ENCODE measurements at regions of chr1 and their contacts with region 1.

Region 1: DNA sequence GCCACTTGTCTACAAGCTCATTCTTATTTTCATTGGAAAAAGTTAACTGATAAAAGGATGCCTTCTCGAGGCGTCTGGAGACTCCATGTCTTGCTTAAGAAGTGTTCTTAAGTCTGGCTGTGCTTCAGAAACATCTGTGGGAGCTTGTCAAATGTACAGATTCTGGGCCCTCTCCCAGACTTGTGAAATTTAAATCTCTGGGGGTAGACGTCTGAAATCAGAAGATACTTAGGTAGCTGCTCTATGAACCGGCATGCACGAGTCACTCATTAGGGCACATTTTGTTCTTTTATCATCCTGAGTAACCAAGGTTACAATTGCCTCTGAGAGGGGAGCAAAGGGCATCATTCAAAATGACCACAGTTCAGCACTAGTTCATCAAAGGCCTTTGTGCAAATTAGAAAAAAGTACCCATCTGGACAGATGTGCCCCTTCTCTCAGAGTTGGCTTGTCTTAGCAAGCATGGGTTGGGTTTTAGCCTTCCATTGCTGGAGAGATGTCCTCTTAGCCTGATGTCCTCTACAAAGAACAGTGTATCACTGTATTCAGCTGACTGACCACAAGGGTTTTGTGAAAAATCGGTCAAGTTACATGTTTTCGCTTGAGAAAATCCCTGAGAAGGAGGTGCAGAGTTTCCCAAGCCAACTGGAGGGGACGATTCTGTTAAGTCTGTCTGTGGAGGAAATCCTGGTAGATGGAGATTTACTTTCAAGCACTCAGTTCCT is 156.9 kb downstream of the ASTN1 start:
- DNase-seq: no peak
- H3K4me3 ChIP-seq: no peak overlapping the region
- H3K27ac ChIP-seq: no peak overlapping the region
- H3K4me1 ChIP-seq: no peaks in the 10 kb centered on the region
- H3K27me3 ChIP-seq: no peaks in the 10 kb centered on the region
- CTCF ChIP-seq: no peak
- EP300 ChIP-seq: no peak
- POLR2A ChIP-seq: no peak

Region 2: GRCh38 chr1:177069490-177069889 is 61.9 kb after region 1 on chr1:
- in situ Hi-C with region 1: no loop called
- intact Hi-C with region 1: loop called (anchors 2 kb)
- DNase-seq: no peak
- H3K4me3 ChIP-seq: no peak overlapping the region
- H3K27ac ChIP-seq: no peak overlapping the region
- H3K4me1 ChIP-seq: no peaks in the 10 kb centered on the region
- H3K27me3 ChIP-seq: no peaks in the 10 kb centered on the region
- CTCF ChIP-seq: no peak
- EP300 ChIP-seq: no peak
- POLR2A ChIP-seq: no peak

Measured in transverse colon (tissue), 4 donors.